ENCODE measurements at regions of chr16 and their contacts with region 1.

Region 1: GRCh38 chr16:30813821-30814189 is 26.8 kb upstream of the ZNF629 start:
- DNase-seq: no peak
- H3K4me3 ChIP-seq: peak overlapping the region; percentile 43
- CTCF ChIP-seq: no peak

Region 2: DNA sequence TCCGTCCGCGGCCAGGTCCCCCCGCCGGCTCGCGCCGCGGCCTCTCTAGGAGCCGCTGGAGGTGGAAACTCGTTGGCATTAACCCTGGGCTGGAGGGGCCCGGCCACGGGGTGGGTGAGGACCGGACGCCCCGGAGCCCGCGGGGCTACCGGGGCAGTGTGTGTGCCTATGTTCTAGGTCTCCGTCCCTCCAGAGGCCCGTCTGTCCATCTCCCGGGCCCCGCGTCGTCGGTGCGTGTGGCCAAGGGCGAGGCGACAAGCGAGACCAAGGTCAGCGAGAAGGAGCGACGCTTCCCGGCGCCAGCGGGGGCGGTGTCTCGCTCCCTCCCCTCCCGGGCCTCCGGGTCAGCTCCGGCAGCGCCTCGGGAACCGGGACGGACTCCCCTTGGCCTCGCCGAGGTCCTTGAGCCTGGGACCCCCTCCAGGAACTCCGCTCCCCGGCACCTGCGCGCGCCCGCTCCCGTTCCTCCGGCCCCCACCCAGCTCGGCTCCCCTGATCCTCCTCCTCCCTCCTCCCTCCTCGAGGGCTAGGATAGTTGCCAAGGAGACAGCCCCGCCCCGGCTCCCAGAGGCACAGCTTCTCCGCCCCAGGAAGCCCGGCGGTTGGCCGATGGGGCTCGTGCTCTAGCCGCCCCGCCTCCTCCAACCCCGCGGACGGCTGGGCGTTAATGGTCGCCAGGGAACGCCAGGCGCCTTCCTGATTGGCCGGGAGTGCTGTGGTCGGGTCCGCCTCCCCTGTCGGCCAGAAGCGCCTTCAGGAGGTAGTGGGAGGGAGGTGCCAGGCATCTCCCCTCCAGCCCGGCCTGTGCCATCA is 286.8 kb before region 1 on chr16:
- CTCF ChIA-PET with region 1: no interaction called
- POLR2A ChIA-PET with region 1: no interaction called
- DNase-seq: peak; percentile 74
- H3K4me3 ChIP-seq: peak overlapping the region; percentile 80
- CTCF ChIP-seq: peak; percentile 60

Region 3: DNA sequence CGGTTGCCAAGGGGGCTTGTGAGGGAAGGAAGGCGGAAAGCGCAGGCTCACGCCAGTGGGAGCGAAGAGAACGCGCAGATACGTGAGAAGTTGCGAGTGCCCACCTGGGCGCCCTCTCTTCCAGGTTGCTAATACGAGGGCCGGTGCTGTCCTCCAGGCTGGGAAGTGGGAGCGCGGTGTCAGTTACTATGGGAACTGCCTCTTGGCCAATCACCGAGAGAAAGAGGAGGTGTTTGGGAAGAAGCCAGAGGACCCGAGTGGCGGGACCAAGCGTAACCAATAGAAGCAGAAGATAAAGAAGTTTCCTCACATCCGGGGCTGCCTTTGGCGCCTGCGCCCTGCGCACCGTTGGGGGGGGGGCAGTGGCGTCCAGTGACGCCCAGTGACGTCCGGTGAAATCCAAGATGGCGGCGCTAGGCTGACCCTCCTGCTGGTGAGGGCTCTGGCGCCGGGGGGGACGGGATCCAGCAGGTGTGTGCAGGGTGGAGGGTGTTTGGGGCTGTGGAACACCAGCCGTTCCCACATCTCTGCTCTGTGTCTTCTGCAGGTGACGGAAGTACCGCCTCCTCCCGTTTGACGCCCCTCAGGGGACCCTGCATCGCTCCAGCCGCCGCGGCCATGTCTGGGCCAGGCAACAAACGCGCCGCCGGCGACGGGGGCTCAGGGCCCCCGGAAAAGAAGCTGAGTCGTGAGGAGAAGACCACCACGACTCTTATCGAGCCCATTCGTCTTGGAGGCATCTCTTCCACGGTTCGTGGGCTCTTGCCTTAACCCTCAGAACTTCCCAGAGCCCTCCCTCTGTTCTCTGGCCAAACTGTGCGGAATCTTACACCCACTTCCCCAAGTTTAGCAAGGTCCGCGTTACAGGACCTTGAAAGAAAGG is 51.6 kb before region 1 on chr16 and contains the starts of genes CFAP119 and RNF40:
- CTCF ChIA-PET with region 1: interaction called, 11 read pairs
- POLR2A ChIA-PET with region 1: no interaction called
- DNase-seq: peak; percentile 88
- H3K4me3 ChIP-seq: peak within 1 kb of the TSS; percentile 96
- CTCF ChIP-seq: no peak

Region 4: DNA sequence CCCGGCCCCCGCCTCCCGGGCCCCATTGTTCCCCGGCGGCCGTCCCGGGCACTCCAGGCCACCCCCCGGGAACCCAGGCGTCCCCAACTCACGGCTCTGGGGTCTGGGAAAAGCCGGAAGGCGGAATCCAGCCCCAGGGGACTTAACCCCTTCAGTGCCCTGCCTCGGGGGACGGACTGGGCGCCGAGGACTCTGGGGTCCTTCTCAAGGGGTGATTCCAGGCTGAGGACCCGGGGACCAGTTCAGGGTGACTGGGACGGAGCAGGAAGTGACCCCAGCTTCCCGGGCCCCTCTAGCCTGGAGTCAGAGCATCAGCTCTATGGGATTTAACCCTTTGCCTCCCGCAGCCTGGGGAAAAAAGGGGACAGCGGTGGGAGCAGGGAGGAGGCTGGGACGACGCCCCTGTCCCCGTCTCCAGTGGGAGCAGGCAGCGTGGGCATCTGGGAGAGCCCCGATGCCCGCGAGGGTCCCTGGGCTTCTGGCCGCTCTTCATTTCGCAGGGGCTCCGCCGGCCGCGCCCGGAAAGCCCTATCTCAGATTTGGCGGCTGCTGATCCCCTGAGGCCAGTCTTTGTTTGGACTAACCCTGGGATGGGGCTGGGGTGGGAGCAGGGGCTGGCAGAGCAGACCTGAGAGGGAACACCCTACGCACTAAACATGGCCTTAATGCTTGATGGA is 26.7 kb before region 1 on chr16 and contains the start of gene ZNF629:
- CTCF ChIA-PET with region 1: interaction called, 13 read pairs
- POLR2A ChIA-PET with region 1: interaction called, 4 read pairs
- DNase-seq: no peak
- H3K4me3 ChIP-seq: peak within 1 kb of the TSS; percentile 93
- CTCF ChIP-seq: no peak

Region 5: DNA sequence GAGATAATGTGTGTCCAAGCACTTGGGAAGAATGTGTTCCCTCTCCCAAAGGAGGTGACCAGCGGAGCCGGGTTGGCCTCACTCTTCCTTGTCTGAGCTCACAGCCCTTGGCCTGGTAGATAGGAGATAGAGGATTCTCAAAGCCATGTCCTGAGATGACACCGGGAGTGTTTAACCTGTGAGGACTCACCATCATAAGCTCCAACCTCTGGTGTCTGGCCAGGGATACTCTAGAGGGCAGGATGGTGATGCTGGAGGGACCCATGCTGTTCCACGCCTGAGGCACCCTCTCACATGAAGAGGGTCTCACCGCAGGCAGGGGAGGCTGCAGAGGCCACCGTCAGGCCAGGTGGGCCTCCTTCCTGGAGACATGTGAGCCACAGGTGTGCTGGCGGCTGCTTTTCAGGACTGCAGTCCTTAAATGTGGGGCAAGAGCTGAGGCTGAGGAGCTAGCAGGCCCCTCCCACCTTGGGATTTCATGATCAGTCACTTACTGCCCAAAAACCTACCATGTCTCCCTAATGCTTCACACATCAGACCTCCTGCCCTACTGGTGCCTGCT is 20.2 kb before region 1 on chr16:
- CTCF ChIA-PET with region 1: interaction called, 13 read pairs
- POLR2A ChIA-PET with region 1: no interaction called
- DNase-seq: no peak
- H3K4me3 ChIP-seq: no peak overlapping the region
- CTCF ChIP-seq: no peak

Region 6: DNA sequence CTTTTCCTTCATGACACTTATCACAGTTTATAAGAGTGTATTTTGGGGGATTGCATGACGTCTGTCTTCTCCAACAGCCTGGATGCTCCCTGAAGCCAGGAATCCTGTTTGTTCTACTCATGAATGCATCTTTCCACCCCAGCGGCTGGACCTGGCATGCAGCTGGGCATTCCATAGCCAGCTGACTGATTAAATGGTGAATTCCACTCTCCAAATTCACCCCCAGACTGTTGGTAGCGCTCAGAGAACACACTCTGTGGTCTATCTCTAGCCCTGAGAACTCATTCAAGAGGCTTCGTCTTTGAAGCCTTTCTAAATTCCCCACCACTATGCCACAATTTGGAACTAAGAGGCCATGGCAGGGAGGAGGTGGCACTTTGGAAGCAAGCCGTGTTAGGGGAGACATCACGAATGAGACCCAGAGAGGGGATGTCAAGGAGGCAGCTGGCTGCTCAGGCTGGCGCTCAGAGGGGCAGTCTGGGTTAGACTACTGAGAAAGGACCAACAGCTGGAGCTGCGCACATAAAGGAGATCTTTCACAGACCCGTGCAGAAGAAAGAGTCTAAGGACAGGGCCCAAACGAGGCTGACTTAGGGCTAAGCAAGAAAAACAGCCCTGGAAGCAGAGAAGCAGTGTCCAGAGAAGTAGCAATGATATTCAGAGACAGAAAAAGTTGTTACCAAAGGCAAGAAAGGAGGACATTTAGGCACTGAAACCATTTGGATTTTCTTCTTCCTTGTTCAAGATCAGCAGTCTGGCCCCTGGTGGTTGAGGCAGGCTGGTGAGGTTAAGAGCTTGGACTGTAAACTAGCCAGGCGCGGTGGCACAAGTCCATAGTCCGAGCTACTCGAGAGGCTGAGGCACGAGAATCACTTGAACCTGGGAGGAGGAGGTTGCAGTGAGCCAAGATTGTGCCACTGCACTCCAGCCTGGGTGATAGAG is 15.6 kb after region 1 on chr16:
- CTCF ChIA-PET with region 1: interaction called, 15 read pairs
- POLR2A ChIA-PET with region 1: no interaction called
- DNase-seq: no peak
- H3K4me3 ChIP-seq: no peak overlapping the region
- CTCF ChIP-seq: no peak

Region 7: DNA sequence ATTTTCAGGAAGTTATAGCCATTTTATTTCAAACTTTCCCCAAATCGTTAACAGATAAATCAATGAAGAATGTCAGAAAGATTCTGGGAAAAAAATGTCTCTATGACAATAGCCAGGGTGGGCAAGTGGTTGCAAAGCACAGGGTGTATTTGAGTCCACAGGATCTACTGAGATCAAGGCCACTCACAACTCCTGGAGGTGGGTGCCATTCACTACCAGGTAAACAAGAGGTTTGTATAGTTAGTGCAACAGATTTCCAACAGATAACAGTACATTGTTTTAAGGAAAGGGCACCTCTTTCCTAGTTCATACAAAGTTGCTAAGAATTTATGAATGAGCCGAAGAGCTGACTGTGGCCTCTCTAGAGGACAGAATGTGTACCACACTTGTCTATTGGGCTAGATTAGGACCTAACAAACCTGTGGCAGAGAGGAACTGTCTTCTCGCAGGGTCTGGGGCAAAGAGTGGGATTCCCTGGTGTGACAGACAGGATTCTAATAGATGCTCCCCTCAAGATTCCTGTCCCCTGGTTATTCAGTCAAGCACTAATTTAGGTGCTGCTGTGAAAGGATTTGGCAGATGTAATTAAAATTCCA is 25.2 kb after region 1 on chr16:
- CTCF ChIA-PET with region 1: interaction called, 28 read pairs
- POLR2A ChIA-PET with region 1: interaction called, 3 read pairs
- DNase-seq: no peak
- H3K4me3 ChIP-seq: no peak overlapping the region
- CTCF ChIP-seq: no peak

Region 8: DNA sequence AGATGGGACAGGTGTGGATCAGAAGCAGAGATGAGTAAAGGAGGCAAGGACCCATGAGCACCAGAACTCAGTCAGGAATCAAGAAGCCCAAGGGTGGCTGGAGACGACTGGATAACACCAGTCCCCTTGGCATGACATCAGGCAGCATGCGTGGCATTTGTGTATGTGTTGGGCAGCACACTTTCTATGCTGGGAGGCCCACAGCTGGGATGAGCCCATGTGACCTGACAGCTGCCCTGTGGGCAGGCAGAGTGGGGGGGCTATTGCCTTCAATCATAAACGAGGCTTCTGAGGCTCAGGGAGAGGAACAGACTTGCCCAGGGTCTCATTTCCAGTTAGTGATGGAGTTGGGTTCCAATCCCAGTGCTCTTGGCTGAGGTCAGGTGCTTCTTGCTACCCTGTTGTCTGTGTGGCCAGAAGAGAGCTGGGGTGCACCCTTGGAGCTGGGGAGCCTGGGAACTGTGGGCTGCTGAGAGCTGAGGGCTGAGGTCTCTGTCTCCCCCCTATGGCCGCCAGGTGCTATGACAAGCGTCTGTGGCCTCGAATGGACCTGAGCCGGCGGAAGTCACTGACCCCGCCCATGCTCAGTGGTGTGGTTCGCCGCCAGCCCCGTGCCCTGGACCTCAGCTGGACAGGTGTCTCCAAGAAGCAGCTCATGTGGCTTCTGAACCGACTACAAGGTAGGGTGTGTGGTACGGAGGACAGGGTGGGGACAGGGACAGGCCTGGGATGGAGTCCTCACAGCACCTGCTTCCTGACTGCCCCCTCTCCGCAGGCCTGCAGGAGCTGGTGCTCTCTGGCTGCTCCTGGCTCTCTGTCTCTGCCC is 128.0 kb after region 1 on chr16:
- CTCF ChIA-PET with region 1: interaction called, 12 read pairs
- POLR2A ChIA-PET with region 1: no interaction called
- DNase-seq: no peak
- H3K4me3 ChIP-seq: no peak overlapping the region
- CTCF ChIP-seq: peak; percentile 88

Region 9: DNA sequence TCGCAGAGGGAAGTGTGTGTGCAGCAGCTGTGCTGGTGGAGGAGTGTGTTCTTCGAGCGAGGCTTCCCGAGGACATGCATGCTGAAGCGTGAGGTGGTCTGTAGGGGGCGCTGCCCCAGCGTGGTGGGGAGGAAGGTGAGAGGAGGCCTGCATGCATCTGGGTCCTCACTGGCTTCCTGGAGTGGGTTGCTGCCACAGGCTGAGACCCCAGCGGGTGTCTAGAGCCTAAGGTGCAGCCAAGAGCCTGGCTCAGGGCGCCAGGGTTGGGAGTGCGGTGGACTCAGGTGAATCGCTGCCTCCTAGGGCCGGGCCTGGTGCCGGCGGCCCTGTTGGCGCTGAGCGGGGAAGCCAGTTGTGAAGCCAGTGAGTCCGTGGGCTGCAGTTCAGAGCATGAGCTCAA is 163.7 kb after region 1 on chr16:
- CTCF ChIA-PET with region 1: no interaction called
- POLR2A ChIA-PET with region 1: no interaction called
- DNase-seq: no peak
- H3K4me3 ChIP-seq: no peak overlapping the region
- CTCF ChIP-seq: peak; percentile 33